Dendritic cell treated with granulocyte-macrophage colony-stimulating factor and Interleukin-4, amounts not matched to agents 40 ng/mL and 50 ng/mL, for 4 days (primary cell): ENCODE measurements at regions of chr3 and their contacts with region 1.

Region 1: DNA sequence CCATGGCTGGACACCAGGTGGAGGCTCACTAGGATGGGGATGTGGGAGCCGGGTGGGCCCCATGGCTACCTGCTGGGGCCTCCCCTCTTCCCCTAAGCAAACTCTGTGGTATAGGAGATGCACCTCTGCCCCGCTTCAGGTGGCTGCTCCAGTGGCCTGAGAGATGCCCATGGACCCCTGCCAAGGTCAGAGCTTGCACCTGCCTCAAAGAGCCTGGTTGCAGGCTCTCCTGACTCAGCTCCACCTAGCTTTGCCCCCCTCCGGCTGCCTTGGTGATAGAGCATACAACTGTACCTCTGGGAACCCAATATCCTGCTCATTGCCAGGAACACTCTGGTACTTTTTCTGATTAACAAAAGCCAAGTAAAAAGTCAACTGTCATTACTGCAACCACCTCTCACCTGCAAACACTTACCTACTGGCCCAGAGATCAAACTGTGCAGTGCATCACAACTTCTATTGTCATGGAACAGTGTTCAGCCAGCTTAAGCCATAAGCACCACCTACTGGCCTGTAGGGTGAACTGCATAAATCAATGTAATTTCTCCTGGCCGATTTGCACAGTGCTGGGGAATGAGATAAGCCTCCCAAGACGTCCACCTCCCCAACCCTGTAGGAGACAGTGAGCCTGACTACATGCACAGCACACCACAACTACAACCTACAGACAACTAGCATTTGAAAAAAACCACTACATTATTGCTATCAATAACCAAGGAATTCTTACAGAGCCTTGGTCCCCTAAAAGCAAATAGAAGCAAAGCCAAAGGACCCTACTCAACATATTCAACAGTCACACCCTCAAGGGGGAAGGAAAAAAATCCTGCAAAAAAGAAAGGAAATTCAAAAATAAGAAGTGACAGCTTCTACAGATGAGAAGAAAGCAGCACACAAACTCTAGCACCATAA is 352.4 kb upstream of the ARHGEF26 start:
- H3K4me3 Mint-ChIP-seq: no peak overlapping the region
- H3K27ac Mint-ChIP-seq: no peak overlapping the region
- H3K4me1 Mint-ChIP-seq: peaks cover 17% of the 10 kb centered on the region
- H3K27me3 Mint-ChIP-seq: peaks cover 7% of the 10 kb centered on the region

Region 2: DNA sequence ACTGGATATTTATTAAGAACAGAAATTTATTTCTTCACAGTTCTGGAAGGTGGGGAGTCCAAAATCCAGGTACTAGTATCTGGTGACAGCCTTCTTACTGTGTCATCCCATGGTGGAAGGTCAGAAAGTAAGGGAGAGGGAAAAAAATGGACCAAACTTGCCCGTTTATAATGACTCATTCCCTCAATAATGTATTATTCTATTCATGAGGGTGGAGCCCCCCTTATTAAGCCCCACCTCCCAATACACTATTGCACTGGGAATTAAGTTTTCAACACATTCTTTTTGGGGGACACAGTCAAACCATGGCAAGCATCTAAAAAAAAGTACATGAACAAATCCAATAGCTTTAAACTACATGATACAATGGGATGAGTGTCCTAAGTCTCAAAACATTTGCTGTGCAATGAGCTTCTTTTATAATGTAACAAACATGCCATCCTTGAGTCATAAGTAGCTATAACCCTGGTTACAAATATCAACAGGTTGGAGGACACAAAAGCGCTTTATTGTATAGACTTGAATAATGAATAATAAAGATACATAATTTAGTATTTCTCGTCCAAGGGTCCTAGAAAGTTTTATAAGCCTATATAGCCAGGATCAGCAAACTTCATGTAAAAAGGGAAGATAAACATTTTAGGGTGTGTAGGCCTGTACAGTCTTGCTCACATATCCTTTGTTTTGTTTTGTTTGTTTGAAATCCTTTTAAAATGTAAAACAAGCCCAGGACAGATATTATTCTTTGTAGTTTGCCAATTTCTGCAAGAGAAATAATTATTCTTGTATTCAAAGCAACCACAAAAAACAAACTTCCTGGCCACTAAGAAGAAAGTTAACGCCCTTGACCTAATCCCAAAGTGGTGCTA is 767.4 kb before region 1 on chr3:
- intact Hi-C with region 1: no loop called
- H3K4me3 Mint-ChIP-seq: no peak overlapping the region
- H3K27ac Mint-ChIP-seq: no peak overlapping the region
- H3K4me1 Mint-ChIP-seq: peaks cover 8% of the 10 kb centered on the region
- H3K27me3 Mint-ChIP-seq: no peaks in the 10 kb centered on the region

Region 3: GRCh38 chr3:153439777-153440176 is 329.0 kb before region 1 on chr3:
- intact Hi-C with region 1: loop called (anchors 10 kb)
- H3K4me3 Mint-ChIP-seq: no peak overlapping the region
- H3K27ac Mint-ChIP-seq: no peak overlapping the region
- H3K4me1 Mint-ChIP-seq: peaks cover 11% of the 10 kb centered on the region
- H3K27me3 Mint-ChIP-seq: no peaks in the 10 kb centered on the region

Region 4: DNA sequence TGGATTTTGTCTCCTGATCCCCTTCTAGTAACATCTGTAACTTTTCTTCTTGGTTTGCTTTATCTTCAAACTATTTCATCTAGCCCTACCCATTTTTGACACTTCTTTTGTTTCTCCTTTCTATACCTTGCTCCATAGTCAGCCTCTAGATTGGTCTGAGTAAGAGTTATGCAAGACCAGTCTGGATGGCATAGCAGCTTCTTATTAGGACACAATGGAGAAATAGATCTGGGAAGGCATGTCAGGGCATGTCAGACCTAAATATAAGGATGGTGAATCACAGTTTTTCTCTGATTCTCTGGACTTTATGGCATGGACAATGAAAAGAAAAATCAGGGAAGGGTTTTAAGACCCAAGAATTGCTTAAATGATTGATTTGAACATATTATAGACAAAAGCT is 154.3 kb before region 1 on chr3:
- intact Hi-C with region 1: loop called (anchors 10 kb)
- H3K4me3 Mint-ChIP-seq: no peak overlapping the region
- H3K27ac Mint-ChIP-seq: no peak overlapping the region
- H3K4me1 Mint-ChIP-seq: peaks cover 6% of the 10 kb centered on the region
- H3K27me3 Mint-ChIP-seq: no peaks in the 10 kb centered on the region

Region 5: GRCh38 chr3:153714588-153715290 is 54.1 kb before region 1 on chr3:
- intact Hi-C with region 1: no loop called
- H3K4me3 Mint-ChIP-seq: no peak overlapping the region
- H3K27ac Mint-ChIP-seq: no peak overlapping the region
- H3K4me1 Mint-ChIP-seq: no peaks in the 10 kb centered on the region
- H3K27me3 Mint-ChIP-seq: no peaks in the 10 kb centered on the region